Activated CD8-positive, alpha-beta memory T cell treated with anti-CD3 and anti-CD28 coated beads, Interleukin-2, amount 10 ng/mL, durations not matched to agents 7 days and 5 days (primary cell): ENCODE measurements at regions of chr10 and their contacts with region 1.

Region 1: DNA sequence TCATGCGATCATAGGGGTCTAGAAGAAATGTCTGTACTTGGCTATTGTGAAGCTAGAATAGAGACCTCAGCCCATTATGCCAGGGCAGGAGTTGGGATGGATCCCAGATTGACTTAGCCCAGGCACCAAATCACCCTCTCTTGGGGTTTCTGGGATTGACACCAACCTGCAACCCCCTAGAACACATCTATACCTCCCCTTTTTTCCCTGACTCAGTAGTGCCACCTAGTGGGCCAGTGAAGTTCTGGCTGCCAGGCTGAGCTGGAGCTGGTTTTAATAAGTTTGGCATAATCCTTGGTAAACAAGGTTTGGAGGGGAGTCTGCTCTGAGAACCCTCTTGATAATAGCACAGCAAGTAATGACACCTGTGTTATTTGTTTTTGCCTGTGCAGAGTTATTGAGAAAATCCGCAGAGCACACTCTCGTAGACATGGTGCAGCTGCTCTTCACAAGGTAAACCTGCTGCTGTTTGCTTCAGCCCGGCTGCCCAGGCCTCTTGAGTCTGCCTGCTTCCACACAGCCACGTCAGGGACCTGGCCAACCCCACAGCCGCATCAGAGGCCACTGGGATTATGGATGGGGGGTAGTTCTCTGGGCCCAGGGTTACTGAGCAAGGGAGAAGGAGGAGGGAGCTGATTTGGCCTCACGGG is 43.3 kb upstream of the NFKB2 start:
- DNase-seq: peak; percentile 80
- ATAC-seq: peak; percentile 74
- H3K4me3 Mint-ChIP-seq: no peak overlapping the region
- H3K27ac Mint-ChIP-seq: no peak overlapping the region
- H3K4me1 Mint-ChIP-seq: peaks cover 4% of the 10 kb centered on the region
- H3K27me3 Mint-ChIP-seq: no peaks in the 10 kb centered on the region

Region 2: GRCh38 chr10:102245101-102245931 is 106.9 kb before region 1 on chr10 and contains the start of gene GBF1:
- CTCF ChIA-PET with region 1: interaction called, 824 read pairs
- DNase-seq: peak; percentile 96
- ATAC-seq: peak; percentile 87
- H3K4me3 Mint-ChIP-seq: peak within 1 kb of the TSS; percentile 97
- H3K27ac Mint-ChIP-seq: peak within 1 kb of the TSS; percentile 91
- H3K4me1 Mint-ChIP-seq: peaks cover 46% of the 10 kb centered on the region
- H3K27me3 Mint-ChIP-seq: peaks cover 18% of the 10 kb centered on the region
- total RNA-seq, gene GBF1: 46.5 to 51.6 TPM

Region 3: DNA sequence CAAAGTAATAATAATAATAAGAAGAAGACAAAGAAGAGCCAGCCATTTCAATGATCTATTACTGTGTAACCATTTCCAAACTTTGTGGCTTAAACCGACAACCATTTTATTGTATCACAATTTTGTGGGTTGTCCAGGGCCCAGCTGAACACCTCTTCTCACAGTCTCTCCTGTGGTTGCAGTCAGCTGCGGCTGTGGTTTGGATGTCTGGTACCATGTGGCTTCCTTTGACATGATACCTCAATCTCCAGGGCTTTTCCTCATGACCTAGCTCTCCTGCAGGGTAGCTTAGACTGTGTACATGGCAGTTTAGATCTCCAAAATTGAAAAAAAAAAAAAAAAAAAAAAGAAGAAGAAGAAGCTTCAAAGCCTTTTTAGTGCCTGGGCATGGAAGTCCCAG is 29.3 kb before region 1 on chr10:
- CTCF ChIA-PET with region 1: interaction called, 17 read pairs
- DNase-seq: peak; percentile 85
- ATAC-seq: peak; percentile 82
- H3K4me3 Mint-ChIP-seq: no peak overlapping the region
- H3K27ac Mint-ChIP-seq: no peak overlapping the region
- H3K4me1 Mint-ChIP-seq: peaks cover 21% of the 10 kb centered on the region
- H3K27me3 Mint-ChIP-seq: no peaks in the 10 kb centered on the region

Region 4: DNA sequence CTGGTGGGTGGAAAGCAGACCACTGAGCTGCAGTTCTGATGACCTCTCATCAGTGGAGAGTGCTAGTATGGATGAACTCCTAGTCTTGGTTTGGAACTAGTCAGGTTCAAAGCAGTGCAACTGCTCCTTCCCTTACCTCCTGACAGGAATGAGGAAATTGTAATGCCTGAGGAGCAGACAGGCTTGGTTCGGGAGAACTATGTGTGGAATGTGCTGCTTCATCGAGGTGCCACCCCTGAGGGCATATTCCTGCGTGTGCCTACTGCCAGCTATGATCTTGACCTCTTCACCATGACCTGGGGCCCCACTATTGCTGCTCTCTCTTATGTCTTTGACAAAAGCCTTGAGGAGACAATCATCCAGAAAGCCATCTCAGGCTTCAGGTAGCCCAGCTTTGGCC is 15.9 kb after region 1 on chr10:
- CTCF ChIA-PET with region 1: interaction called, 52 read pairs
- DNase-seq: no peak
- ATAC-seq: no peak
- H3K4me3 Mint-ChIP-seq: no peak overlapping the region
- H3K27ac Mint-ChIP-seq: no peak overlapping the region
- H3K4me1 Mint-ChIP-seq: no peaks in the 10 kb centered on the region
- H3K27me3 Mint-ChIP-seq: no peaks in the 10 kb centered on the region

Region 5: GRCh38 chr10:102394079-102394800 is 42.0 kb after region 1 on chr10:
- CTCF ChIA-PET with region 1: interaction called, 25 read pairs
- DNase-seq: peak; percentile 99
- ATAC-seq: peak; percentile 88
- H3K4me3 Mint-ChIP-seq: peak overlapping the region; percentile 84
- H3K27ac Mint-ChIP-seq: peak overlapping the region; percentile 90
- H3K4me1 Mint-ChIP-seq: peaks cover 38% of the 10 kb centered on the region
- H3K27me3 Mint-ChIP-seq: no peaks in the 10 kb centered on the region

Region 6: GRCh38 chr10:102461187-102462054 is 109.2 kb after region 1 on chr10:
- CTCF ChIA-PET with region 1: interaction called, 11 read pairs
- DNase-seq: peak; percentile 94
- ATAC-seq: peak; percentile 99
- H3K4me3 Mint-ChIP-seq: peak overlapping the region; percentile 82
- H3K27ac Mint-ChIP-seq: peak overlapping the region; percentile 79
- H3K4me1 Mint-ChIP-seq: peaks cover 29% of the 10 kb centered on the region
- H3K27me3 Mint-ChIP-seq: no peaks in the 10 kb centered on the region

Region 7: GRCh38 chr10:102812231-102812876 is 460.2 kb after region 1 on chr10:
- CTCF ChIA-PET with region 1: no interaction called
- DNase-seq: peak; percentile 76
- ATAC-seq: peak; percentile 88
- H3K4me3 Mint-ChIP-seq: no peak overlapping the region
- H3K27ac Mint-ChIP-seq: peak overlapping the region; percentile 84
- H3K4me1 Mint-ChIP-seq: peaks cover 32% of the 10 kb centered on the region
- H3K27me3 Mint-ChIP-seq: no peaks in the 10 kb centered on the region